ENCODE measurements at regions of chr10 and their contacts with region 1.

Region 1: GRCh38 chr10:37857287-37858211 is at the start of gene ZNF248:
- DNase-seq: peak; percentile 97
- H3K4me3 ChIP-seq: peak within 1 kb of the TSS; percentile 60 to 95 (median 88)
- H3K27ac ChIP-seq: peak within 1 kb of the TSS; percentile 98 to 100 (median 100)
- H3K4me1 ChIP-seq: peaks cover 9 to 55% (median 19%) of the 10 kb centered on the region in 4 donors
- H3K27me3 ChIP-seq: no peaks in the 10 kb centered on the region
- CTCF ChIP-seq: peak in 1 of 5 experiments; percentile 16
- EP300 ChIP-seq: peak; percentile 77
- POLR2A ChIP-seq: peak; percentile 98
- total RNA-seq, gene ZNF248: 13.8 to 24.7 (median 19.1) TPM

Region 2: DNA sequence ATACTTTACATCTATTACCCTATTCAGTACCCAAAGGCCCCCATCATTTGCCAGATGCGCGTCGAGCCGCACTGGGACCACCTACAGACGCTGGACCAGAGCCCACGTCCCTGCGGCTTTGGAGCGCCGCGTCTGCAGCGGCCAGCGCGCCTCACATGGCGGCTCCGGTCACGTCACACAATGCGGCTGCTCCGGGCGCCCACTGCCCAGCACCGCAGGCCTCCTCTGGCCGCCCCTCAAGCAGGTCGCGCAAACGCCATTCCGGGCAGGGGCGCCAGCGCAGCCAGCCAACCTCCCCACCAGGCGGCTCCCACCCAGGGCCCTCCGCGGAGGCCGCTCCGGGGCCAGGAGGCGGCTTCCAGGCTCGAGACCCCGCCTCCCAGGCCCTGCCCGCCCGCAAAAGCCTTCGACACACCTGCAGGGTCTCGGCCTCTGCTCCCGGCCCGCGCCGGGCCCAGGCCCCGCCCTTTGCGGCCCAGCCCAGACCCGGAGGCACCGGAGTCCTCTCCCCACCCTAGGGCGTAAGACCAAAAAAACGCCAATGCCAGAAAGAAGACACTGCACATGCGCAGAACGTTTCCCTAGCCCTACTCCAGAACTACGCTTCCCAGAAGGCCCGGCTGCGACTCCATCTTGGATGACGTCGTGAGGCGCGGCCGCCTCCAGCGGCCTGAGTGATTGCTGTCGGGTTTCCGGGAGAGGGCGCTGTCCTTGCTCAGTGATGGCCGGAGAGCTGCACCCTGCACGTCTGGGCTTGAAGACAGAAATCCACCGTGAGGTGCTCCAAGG is 118.7 kb after region 1 on chr10 and contains the start of gene ZNF25:
- in situ Hi-C with region 1: loop called in 1 of 4 experiments (anchors 10 kb)
- intact Hi-C with region 1: loop called (anchors 10 kb)
- DNase-seq: peak; percentile 99
- H3K4me3 ChIP-seq: peak within 1 kb of the TSS; percentile 41 to 84 (median 78)
- H3K27ac ChIP-seq: peak within 1 kb of the TSS; percentile 93 to 98 (median 97)
- H3K4me1 ChIP-seq: peaks cover 0 to 17% (median 7%) of the 10 kb centered on the region in 4 donors
- H3K27me3 ChIP-seq: no peaks in the 10 kb centered on the region
- CTCF ChIP-seq: peak; percentile 69 to 96 (median 83)
- EP300 ChIP-seq: no peak
- POLR2A ChIP-seq: peak; percentile 86
- total RNA-seq, gene ZNF25: 0.80 to 8.4 (median 5.1) TPM

Region 3: DNA sequence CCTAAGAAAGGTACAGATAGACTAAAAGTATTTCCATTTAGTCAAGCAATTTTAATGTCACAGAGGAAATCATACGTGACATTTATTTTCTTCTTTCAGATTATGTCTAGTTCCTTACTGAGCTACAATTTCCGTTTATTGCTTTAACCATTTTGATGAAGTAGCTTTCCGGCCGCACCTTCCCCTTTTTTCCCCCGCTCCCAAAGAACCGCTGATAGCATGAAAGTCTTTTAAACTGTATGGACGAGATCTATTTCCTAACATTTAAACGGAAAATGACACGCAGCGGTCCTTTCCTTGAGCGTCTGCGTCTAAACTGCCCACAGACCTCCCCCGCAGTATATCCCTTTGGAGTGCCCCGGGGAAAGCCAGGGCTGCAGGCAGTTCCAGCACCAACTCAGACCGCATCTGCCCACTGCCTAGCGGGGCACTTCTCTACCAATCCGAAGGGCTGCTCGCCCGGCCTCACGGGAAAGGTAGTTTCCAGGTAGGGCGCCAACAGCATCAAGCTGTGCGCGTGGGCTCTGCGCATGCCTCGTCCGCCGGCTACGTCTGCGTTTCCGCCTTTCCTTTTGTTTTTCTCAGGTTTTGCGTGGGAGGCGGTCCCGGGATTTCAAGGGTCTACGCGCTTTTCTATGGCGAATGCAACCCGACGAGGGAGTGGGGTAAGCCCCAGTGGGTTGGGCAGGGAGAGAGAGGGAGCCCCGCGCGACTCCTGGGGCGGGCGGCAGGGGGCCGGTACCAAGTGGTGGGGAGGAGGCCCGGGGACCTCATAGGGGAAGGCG is 152.8 kb after region 1 on chr10 and contains the start of gene ZNF33A:
- in situ Hi-C with region 1: loop called in 1 of 4 experiments (anchors 25 kb)
- intact Hi-C with region 1: no loop called
- DNase-seq: peak; percentile 95
- H3K4me3 ChIP-seq: peak within 1 kb of the TSS; percentile 69 to 87 (median 72)
- H3K27ac ChIP-seq: peak within 1 kb of the TSS; percentile 92 to 99 (median 98)
- H3K4me1 ChIP-seq: peaks cover 4 to 15% (median 10%) of the 10 kb centered on the region in 4 donors
- H3K27me3 ChIP-seq: no peaks in the 10 kb centered on the region
- CTCF ChIP-seq: peak in 3 of 5 experiments; percentile 9 to 26 (median 9)
- EP300 ChIP-seq: no peak
- POLR2A ChIP-seq: no peak
- total RNA-seq, gene ZNF33A: 17.3 to 51.1 (median 25.5) TPM

Region 4: DNA sequence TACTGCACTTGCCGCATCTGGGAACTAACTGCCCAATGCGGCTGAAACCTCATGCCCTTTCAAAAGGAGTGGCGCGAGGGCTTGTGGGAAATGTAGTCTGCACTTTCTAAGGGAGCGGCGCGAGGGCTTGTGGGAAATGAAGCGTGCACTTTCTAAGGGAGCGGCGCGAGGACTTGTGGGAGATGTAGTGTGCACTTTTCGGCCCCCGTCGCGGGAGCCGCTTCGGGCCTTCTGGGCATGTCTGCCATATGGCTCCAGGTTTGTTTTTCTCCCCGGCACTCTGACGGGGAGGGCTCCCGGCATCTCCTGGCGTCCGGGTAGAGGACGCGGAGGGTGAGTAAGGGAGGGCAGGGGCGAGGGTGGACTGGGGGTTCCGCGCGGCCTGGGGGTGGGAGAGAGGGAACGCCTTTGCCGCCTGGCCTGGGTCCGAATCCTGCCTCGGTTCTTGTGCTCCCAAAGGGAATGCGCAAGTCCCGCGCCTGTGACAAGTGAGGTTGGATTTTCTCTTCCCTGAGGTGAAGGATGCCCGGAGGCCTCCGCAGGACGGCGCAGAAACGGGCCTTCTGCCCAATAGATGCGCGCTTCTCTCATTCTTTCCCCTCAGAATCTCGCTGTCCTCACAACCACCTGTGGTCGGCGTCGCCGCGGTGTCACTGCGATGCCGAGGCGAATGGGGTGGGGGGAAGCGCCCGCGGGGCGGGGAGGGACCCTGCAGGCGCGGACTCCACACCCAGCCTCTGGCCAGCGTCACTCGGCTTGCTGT is 236.8 kb after region 1 on chr10 and contains the start of gene ZNF37A:
- in situ Hi-C with region 1: loop called in 1 of 4 experiments (anchors 25 kb)
- intact Hi-C with region 1: no loop called
- DNase-seq: peak; percentile 95
- H3K4me3 ChIP-seq: peak within 1 kb of the TSS; percentile 54 to 77 (median 60)
- H3K27ac ChIP-seq: peak within 1 kb of the TSS; percentile 84 to 89 (median 86)
- H3K4me1 ChIP-seq: peaks cover 0 to 14% (median 10%) of the 10 kb centered on the region in 4 donors
- H3K27me3 ChIP-seq: no peaks in the 10 kb centered on the region
- CTCF ChIP-seq: no peak
- EP300 ChIP-seq: no peak
- POLR2A ChIP-seq: peak; percentile 54
- total RNA-seq, gene ZNF37A: 10.4 to 17.9 (median 13.0) TPM